Posterior cingulate gyrus (tissue), 11 donors: ENCODE measurements at regions of chr9 and their contacts with region 1.

Region 1: DNA sequence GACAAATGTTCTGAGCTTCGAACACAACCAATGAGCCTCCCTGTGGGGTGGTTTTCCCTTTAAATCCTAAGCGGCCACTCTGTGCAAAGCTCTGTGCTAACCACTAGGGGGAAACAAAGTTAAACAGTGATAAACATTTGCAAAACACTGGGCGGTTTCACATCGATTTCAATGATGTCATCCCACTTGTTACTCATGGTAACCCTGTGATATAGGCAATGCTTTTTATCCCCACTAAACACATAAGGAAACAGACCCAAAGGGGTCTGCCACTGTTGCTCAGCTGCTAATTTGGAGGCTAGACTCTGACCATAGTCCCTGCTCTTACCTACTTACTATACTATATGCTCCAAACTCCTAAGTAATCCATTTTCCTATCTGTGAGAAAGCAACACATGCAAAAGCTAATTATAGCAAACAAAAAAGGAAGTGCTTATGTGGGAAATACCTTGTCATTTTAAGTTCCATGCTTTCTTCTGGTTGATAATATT is 57.3 kb downstream of the PTPN3 start:
- DNase-seq: peak in 3 of 10 donors; percentile 27 to 41 (median 34)

Region 2: DNA sequence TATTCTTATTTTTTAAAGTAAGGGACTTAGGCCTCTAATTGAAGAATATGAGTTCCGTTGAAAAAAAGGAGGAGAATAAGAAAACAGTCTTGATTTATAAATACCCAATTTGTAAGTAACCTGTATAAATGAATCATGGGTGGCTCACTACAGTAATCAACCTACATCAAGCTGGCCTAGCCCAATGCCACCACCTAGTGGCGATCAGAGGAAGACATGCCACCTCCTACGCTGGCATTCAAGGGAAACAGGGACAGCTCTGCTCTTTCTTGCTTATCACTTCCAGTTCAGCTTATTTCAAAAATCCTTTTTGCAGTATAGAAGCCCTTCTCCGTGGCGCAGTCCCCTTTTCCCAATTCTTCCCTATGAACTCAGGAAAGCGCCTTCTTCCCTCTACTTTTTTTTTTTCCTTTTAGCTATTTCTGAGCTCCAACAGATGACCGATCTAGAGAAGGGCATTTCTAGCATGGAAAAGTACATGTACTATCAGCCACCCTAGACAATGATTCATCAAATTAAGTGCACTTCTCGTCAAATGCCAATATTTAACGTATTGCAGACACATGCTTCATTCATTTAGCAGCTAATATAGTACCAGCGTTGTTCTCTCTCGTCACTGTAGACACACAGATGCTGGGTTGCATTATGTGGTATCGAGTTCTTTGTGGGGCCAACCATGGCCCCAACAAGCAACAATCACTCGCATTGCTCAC is 29.0 kb after region 1 on chr9:
- intact Hi-C with region 1: loop called (anchors 2 kb)
- DNase-seq: peak; percentile 67 to 96 (median 82)

Region 3: DNA sequence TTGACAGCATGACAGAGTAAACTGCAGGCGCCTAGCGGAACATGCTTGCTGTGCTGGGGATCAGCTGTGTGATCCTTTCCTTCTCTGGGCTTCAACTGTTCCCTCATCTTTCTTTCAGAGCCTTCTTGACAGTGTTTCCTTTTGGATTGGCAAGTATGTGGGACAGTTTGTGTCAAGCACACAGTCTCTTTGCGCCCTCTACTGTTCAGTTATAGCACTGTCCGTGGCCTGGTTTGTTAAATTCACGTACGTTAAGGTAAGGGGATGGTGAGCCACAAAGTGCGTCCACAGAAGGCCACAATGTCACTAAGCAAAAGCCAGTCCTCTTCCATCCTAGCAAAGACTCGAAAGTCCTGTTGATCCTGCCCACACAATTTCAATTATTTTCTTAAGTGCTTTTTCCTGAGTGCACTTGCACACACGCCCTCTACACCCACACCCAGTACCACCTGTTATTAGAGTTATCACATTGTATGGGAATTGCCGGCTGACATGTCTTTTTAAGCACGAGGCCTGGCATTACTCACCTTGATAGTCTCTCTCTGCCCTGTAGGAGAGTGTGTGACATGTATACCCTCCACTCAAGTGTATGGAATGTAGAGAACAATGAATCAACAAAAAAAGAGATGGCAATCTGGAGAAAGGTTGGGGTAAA is 79.8 kb after region 1 on chr9:
- intact Hi-C with region 1: loop called (anchors 2 kb)
- DNase-seq: peak in 7 of 10 donors; percentile 33 to 89 (median 62)